GM23248 (cell line): ENCODE measurements at regions of chr15 and their contacts with region 1.

Region 1: DNA sequence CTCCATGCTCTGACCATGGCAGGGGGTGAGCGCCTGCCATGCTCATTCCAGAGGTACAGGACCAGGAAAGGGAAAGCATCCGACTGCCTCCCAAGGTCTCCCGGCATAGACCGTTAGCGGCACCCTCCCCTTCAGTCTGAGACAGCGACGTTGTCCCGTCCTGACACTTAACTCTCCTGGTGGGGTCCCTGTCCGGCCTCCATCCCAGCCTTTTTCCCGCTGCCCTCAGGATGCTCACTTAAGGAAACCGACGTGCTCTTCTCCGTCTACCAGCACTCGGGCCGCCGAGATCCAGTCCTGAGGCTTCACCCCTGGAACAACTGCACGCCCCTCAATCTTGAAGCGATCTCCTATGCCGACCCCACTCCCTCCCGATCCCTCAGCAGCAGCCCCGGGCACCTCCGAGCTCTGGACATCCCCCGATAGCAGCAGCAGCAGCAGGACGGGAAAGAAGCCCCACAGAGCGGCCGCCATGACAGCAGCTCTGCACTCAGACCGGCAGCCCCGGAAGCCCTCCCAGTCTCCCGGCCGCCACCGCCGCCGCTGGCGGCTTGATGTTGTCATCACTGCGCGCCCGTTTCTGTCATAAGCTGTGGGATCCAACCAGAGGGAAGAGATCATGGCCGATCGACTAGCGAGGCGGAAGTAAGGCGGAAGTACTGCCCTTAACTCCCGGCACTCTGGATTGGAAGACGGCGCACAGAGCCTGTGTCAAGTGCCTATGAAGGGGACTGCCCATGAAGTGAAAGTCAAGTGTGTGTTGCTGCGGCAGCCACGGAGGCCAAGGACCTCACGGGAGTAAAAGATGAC is at the starts of genes EMC7 and PGBD4:
- DNase-seq: peak; percentile 100
- H3K4me3 ChIP-seq: peak within 1 kb of the TSS; percentile 88
- H3K27ac ChIP-seq: peak within 1 kb of the TSS; percentile 84
- H3K4me1 ChIP-seq: peaks cover 25% of the 10 kb centered on the region
- H3K27me3 ChIP-seq: no peaks in the 10 kb centered on the region
- total RNA-seq, gene EMC7: 29.6 and 52.6 TPM in 2 replicates
- total RNA-seq, gene PGBD4: 0.76 and 1.7 TPM in 2 replicates

Region 2: DNA sequence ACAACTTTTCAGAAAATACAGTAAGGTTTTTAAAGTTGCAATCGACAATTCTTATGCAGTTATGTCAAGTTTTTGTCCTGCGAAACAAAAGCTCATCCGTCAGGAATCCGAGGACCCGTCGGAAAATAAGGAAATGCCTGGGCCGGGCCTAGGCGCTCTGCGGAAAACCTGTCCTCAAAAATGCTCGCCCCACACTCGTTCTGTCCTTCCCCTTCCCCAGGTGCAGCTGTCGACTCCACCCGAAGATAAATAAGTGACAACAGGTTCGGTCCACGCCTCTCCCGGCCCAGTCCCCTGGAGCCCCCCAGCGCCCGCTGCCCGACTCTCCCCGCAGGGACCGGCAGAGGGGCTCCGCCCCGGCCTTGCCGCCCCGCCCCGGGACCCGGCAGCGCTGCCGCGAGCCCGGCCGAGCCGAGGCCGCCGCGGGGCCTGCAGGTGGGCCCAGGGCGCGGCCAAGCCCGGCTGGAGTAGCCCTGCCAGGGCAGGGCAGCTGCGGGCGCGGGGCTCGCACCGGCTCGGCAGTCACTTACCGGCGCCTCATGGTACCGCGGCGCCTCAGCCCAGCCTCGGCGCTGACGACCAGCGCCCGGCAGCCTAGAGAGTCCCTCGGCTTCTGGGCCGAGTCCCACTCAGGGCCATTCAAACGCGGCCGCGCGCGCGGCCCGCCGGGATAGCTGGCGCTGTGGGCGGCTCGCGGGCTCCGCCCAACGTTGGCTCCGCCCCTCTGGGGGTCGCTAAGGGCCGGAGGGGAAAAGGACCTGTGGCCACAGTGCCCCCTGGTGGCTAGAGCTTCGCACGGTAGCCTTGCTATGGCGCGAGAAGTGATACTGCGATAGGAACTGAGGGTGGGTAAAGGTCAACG is 108.1 kb after region 1 on chr15 and contains the start of gene KATNBL1:
- in situ Hi-C with region 1: loop called (anchors 10 kb)
- DNase-seq: peak; percentile 97
- H3K4me3 ChIP-seq: peak within 1 kb of the TSS; percentile 97
- H3K27ac ChIP-seq: peak within 1 kb of the TSS; percentile 78
- H3K4me1 ChIP-seq: peaks cover 21% of the 10 kb centered on the region
- H3K27me3 ChIP-seq: no peaks in the 10 kb centered on the region
- total RNA-seq, gene KATNBL1: 39.3 and 50.8 TPM in 2 replicates

Region 3: DNA sequence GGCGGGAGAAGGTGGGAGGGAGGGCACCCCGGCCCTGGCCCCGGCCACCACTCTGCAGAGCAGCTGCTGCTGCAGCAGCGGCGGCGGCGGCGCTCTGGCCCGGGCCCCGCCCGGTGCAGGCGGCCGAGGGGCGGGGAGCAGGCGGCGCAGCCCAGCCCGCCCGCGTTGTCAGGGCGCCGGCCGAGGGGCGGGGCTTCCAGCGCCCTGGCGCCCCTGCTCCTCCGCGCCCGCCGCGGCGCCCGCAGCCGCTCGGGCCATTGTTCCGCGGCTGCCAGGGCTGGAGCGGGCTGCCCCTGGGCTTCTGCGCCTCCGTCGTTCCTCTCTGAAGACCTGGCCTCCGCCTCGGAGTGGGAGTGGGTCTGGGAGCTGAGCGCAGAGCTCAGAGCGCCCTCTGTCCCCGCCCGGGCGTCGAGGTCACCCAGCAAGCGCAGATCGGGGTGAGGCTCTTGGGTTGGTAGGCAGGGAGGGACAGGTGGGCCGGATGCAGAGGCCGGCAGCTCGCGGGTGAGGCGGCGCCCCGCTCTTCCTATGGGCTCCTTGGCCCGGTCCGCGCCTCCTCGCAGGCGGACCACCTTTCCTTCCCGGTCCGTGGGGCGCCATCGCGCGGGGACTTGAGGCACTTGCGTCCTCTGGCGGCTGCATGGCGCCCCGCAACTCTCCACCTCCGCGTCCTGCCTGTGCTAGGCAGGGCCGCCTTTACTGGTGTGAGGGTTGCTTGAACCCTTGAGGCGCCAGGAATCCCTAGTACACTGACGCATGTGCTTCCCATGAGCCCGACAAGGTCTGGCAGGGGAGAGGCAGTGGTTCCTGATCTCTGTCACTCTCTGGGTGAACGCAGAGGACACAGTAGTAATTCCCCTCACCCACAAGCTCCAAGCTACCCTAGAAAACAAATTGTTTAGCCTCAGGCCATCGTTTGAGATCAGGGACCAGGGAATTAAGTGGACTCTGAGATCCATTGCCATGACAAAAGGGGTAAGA is 265.8 kb after region 1 on chr15 and contains the start of gene LPCAT4:
- in situ Hi-C with region 1: loop called (anchors 25 kb)
- DNase-seq: peak; percentile 96
- H3K4me3 ChIP-seq: peak within 1 kb of the TSS; percentile 92
- H3K27ac ChIP-seq: peak within 1 kb of the TSS; percentile 77
- H3K4me1 ChIP-seq: no peaks in the 10 kb centered on the region; the same call in 1 of the 2 replicates
- H3K27me3 ChIP-seq: no peaks in the 10 kb centered on the region
- total RNA-seq, gene LPCAT4: 17.5 and 34.1 TPM in 2 replicates